Mammary epithelial cell (primary cell): ENCODE measurements at regions of chr2 and their contacts with region 1.

Region 1: DNA sequence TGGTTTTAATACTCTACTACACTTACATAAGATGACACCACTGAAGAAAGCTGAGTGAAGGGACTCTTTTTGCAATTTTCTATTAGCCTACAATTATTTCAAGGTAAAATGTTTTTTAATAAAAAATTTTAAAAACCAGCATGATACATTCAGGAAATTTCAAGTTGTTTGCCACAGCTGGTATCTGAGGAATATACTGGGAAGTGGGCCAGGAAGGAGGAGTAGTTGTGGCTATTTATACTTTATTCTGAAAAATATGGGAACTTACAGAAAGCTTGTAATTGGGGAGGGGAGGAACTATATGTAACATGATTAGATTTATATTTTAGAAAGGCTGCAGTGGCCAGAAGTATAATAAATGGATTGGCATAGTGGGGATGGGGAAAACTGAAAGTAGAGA is 40.8 kb downstream of the WDR35 start:
- DNase-seq: no peak
- H3K4me3 ChIP-seq: no peak overlapping the region
- H3K27ac ChIP-seq: no peak overlapping the region
- H3K4me1 ChIP-seq: no peaks in the 10 kb centered on the region
- H3K27me3 ChIP-seq: no peaks in the 10 kb centered on the region
- CTCF ChIP-seq: no peak

Region 2: GRCh38 chr2:19901442-19902215 is 47.4 kb before region 1 on chr2 and contains the start of gene TTC32:
- CTCF ChIA-PET with region 1: no interaction called
- dilution Hi-C with region 1: no loop called
- in situ Hi-C with region 1: no loop called
- intact Hi-C with region 1: loop called (anchors 5 kb)
- DNase-seq: peak; percentile 95
- H3K4me3 ChIP-seq: peak within 1 kb of the TSS; percentile 92 to 94 (median 93)
- H3K27ac ChIP-seq: peak within 1 kb of the TSS; percentile 97
- H3K4me1 ChIP-seq: peaks cover 23% of the 10 kb centered on the region
- H3K27me3 ChIP-seq: no peaks in the 10 kb centered on the region
- CTCF ChIP-seq: no peak
- total RNA-seq, gene TTC32: 8.0 to 12.5 TPM